Naive thymus-derived CD4-positive, alpha-beta T cell (primary cell): ENCODE measurements at regions of chr6 and their contacts with region 1.

Region 1: DNA sequence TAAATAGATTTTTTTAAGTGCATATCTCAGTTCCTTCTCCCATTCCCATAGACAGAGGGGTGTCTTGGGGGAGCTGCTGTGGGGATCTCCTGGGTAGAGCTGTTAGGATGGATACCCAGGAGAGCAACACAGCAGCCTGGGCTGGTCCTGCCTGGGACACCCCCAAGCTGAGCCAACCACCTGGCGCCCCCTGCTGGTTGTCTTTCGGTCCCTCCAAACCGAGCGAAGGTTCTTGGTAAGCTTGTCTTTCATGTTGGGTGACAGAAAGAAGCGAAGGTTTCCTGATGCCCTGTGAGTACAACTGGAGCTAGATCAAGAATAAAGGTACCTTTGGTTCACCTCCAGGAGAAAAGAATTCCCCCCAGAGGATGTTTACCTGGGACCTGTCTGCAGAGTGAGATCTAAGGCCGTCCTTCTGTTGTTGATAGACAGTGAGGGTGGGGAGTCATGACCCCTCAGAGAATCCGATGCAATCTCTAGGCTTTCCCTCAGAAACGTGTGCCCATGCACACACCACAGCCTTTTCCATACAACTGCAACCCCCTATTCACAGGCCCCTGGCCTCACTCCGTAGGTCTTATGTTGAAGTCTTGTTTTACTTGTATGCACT is 50.8 kb downstream of the SNX9 start:
- DNase-seq: peak; percentile 65 to 84 (median 80)
- ATAC-seq: peak; percentile 87
- H3K4me3 ChIP-seq: no peak overlapping the region
- H3K4me3 Mint-ChIP-seq: peak overlapping the region in 2 of 10 donors; percentile 14 to 21
- H3K27ac ChIP-seq: no peak overlapping the region
- H3K27ac Mint-ChIP-seq: peak overlapping the region in 7 of 9 donors; percentile 26 to 87 (median 56)
- H3K4me1 ChIP-seq: peaks cover 0 to 25% of the 10 kb centered on the region in 2 donors
- H3K4me1 Mint-ChIP-seq: peaks cover 4 to 47% (median 44%) of the 10 kb centered on the region in 7 donors
- H3K27me3 ChIP-seq: no peaks in the 10 kb centered on the region
- H3K27me3 Mint-ChIP-seq: no peaks in the 10 kb centered on the region

Region 2: GRCh38 chr6:157323255-157323965 is 550.4 kb before region 1 on chr6 and contains the start of gene TMEM242:
- CTCF ChIA-PET with region 1: no interaction called
- POLR2A ChIA-PET with region 1: no interaction called
- intact Hi-C with region 1: loop called (anchors 5 kb)
- DNase-seq: peak; percentile 68 to 93 (median 81)
- ATAC-seq: peak; percentile 98
- H3K4me3 ChIP-seq: peak within 1 kb of the TSS; percentile 95
- H3K4me3 Mint-ChIP-seq: peak within 1 kb of the TSS; percentile 93 to 99 (median 95)
- H3K27ac ChIP-seq: peak within 1 kb of the TSS; percentile 76
- H3K27ac Mint-ChIP-seq: peak within 1 kb of the TSS; percentile 78 to 93 (median 92)
- H3K4me1 ChIP-seq: peaks cover 8 to 12% of the 10 kb centered on the region in 2 donors
- H3K4me1 Mint-ChIP-seq: peaks cover 10 to 47% (median 24%) of the 10 kb centered on the region in 7 donors
- H3K27me3 ChIP-seq: no peaks in the 10 kb centered on the region
- H3K27me3 Mint-ChIP-seq: peaks cover 0 to 30% (median 10%) of the 10 kb centered on the region in 5 donors
- total RNA-seq, gene TMEM242: 11.6 to 15.6 (median 13.2) TPM

Region 3: DNA sequence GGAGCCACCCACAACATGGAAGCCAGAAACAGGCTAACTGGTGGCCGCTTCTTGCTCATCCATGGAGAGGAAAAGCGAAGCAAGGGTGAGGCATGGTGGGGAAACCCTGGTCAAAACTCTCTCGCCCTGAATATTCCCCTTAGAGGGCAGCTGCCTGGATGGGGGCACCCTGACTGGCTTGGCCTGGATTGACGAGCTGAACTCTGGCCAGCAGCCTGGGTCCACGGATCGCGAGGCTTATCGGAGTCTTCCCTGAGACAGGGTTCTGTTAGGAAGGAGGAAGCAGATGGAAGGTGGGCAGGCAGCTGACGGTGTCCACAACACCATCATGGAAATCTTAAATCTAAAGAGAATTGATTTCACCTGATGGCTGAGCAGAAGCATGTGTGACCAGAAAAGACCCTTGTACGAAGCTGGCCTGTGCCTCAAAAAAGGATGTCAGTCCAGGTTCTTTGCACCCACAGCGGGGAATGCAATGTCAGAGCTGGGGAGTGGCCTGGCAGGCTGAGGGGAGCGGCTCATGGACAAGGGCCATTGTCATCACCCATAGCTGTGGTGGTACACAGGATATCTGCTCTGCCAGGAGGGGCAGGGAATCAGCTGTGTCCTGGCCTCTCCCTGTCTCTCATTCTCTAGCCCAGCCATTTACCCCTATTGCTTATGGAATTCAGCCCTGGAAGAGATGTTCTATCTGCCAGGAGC is 160.2 kb before region 1 on chr6:
- CTCF ChIA-PET with region 1: interaction called, 5 read pairs
- POLR2A ChIA-PET with region 1: no interaction called
- intact Hi-C with region 1: loop called in 1 of 2 experiments (anchors 1 kb)
- DNase-seq: no peak
- ATAC-seq: no peak
- H3K4me3 ChIP-seq: no peak overlapping the region
- H3K4me3 Mint-ChIP-seq: no peak overlapping the region
- H3K27ac ChIP-seq: no peak overlapping the region
- H3K27ac Mint-ChIP-seq: peak overlapping the region in 1 of 9 donors; percentile 36
- H3K4me1 ChIP-seq: no peaks in the 10 kb centered on the region
- H3K4me1 Mint-ChIP-seq: peaks cover 0 to 4% (median 0%) of the 10 kb centered on the region in 7 donors
- H3K27me3 ChIP-seq: no peaks in the 10 kb centered on the region
- H3K27me3 Mint-ChIP-seq: peaks cover 0 to 4% (median 0%) of the 10 kb centered on the region in 5 donors

Region 4: GRCh38 chr6:157813757-157814455 is 59.9 kb before region 1 on chr6:
- CTCF ChIA-PET with region 1: interaction called, 3 read pairs
- POLR2A ChIA-PET with region 1: no interaction called
- intact Hi-C with region 1: loop called in 1 of 2 experiments (anchors 2 kb)
- DNase-seq: no peak
- ATAC-seq: no peak
- H3K4me3 ChIP-seq: no peak overlapping the region
- H3K4me3 Mint-ChIP-seq: peak overlapping the region in 5 of 10 donors; percentile 11 to 72 (median 70)
- H3K27ac ChIP-seq: peak overlapping the region; percentile 54
- H3K27ac Mint-ChIP-seq: peak overlapping the region in 8 of 9 donors; percentile 85 to 92 (median 89)
- H3K4me1 ChIP-seq: peaks cover 0 to 41% of the 10 kb centered on the region in 2 donors
- H3K4me1 Mint-ChIP-seq: peaks cover 22 to 75% (median 68%) of the 10 kb centered on the region in 7 donors
- H3K27me3 ChIP-seq: no peaks in the 10 kb centered on the region
- H3K27me3 Mint-ChIP-seq: peaks cover 0 to 50% (median 0%) of the 10 kb centered on the region in 5 donors

Region 5: GRCh38 chr6:157885211-157885788 is 11.5 kb after region 1 on chr6:
- CTCF ChIA-PET with region 1: interaction called, 27 read pairs
- POLR2A ChIA-PET with region 1: interaction called, 3 read pairs
- intact Hi-C with region 1: loop called in 1 of 2 experiments (anchors 1 kb)
- DNase-seq: peak in 7 of 9 donors; percentile 74 to 90 (median 86)
- ATAC-seq: peak; percentile 89
- H3K4me3 ChIP-seq: no peak overlapping the region
- H3K4me3 Mint-ChIP-seq: peak overlapping the region; percentile 30 to 78 (median 54)
- H3K27ac ChIP-seq: peak overlapping the region; percentile 93
- H3K27ac Mint-ChIP-seq: peak overlapping the region; percentile 86 to 99 (median 96)
- H3K4me1 ChIP-seq: peaks cover 0 to 33% of the 10 kb centered on the region in 2 donors
- H3K4me1 Mint-ChIP-seq: peaks cover 31 to 92% (median 85%) of the 10 kb centered on the region in 7 donors
- H3K27me3 ChIP-seq: no peaks in the 10 kb centered on the region
- H3K27me3 Mint-ChIP-seq: peaks cover 0 to 3% (median 0%) of the 10 kb centered on the region in 5 donors